ENCODE measurements at regions of chr17 and their contacts with region 1.

Region 1: DNA sequence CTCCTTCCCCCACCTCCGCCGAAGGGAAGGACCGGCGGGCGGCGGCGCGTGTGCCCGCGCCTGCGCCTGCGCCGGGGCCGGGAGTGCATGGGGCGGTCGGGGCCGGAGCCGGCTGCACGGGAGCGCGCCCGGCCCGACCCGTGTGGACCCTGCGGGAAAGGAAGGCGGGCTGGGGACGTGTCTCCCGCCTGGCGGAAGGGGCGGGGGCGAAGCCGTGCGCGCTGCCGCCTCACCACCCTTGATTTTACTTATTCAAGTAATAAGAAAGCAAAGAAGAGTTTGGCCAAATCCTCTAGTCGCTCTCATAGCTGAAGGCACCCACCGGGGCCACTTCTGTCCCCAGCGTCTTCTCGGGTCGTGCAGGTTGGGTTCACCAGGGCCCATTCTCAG is 596 bp upstream of the PFN1 start:
- DNase-seq: peak; percentile 91 to 94
- ATAC-seq: peak; percentile 90
- H3K4me3 ChIP-seq: peak overlapping the region; percentile 72 to 75
- H3K27ac ChIP-seq: peak overlapping the region in 1 of 2 donors; percentile 89
- H3K4me1 ChIP-seq: no peaks in the 10 kb centered on the region
- H3K27me3 ChIP-seq: peaks cover 0 to 2% of the 10 kb centered on the region in 2 donors

Region 2: DNA sequence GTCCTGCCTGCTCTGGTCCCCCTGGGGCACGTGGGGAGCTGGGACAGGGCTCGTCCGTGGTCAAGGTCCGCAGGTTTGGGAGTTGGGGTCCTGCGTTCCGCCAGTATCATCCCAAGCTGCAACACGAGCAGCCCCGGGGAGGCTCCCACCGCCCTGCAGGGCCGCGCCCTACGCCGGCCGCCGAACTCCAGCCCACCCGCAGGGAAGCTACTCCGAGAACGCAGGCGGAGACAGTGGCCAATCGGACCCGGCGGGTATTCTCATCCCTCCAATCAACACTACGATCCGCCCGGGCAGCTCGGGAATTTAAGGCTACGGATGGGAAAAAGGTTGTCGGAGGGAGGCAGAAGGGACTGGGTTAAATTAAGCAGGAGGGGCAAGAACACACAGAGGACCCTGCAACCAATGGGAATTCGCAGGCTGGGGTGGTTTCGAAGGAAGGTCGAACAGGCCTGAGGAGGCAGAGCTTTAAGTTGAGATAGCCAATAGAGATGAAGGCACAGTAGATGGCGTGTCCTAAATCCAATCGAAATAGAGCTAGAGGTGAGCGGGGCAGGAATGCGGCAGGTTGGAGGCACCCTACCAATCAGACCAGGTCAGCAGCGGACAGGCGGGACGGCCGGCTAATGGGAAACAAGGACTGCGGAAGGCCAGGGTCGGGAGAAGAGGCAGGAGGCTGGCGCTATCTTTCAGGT is 18.1 kb after region 1 on chr17:
- intact Hi-C with region 1: loop called in 1 of 2 experiments (anchors 1 kb)
- DNase-seq: peak; percentile 97 to 99
- ATAC-seq: peak; percentile 96
- H3K4me3 ChIP-seq: peak overlapping the region; percentile 51 to 65
- H3K27ac ChIP-seq: peak overlapping the region in 1 of 2 donors; percentile 62
- H3K4me1 ChIP-seq: peaks cover 0 to 2% of the 10 kb centered on the region in 2 donors
- H3K27me3 ChIP-seq: no peaks in the 10 kb centered on the region

Measured in aorta (tissue), 5 donors.